MCF 10A (cell line): ENCODE measurements at regions of chr10 and their contacts with region 1.

Region 1: GRCh38 chr10:2978111-2978510 is 89.2 kb upstream of the PFKP start:
- DNase-seq: peak; percentile 50
- H3K4me3 Mint-ChIP-seq: no peak overlapping the region
- H3K27ac Mint-ChIP-seq: no peak overlapping the region
- H3K4me1 Mint-ChIP-seq: peaks cover 5% of the 10 kb centered on the region
- H3K27me3 Mint-ChIP-seq: no peaks in the 10 kb centered on the region
- CTCF ChIP-seq: peak; percentile 60

Region 2: GRCh38 chr10:1420661-1421362 is 1557.3 kb before region 1 on chr10:
- CTCF ChIA-PET with region 1: interaction called, 4 read pairs
- POLR2A ChIA-PET with region 1: no interaction called
- intact Hi-C with region 1: loop called (anchors 10 kb)
- DNase-seq: peak; percentile 69
- H3K4me3 Mint-ChIP-seq: peak overlapping the region; percentile 45
- H3K27ac Mint-ChIP-seq: no peak overlapping the region
- H3K4me1 Mint-ChIP-seq: peaks cover 6% of the 10 kb centered on the region
- H3K27me3 Mint-ChIP-seq: peaks cover 19% of the 10 kb centered on the region
- CTCF ChIP-seq: peak; percentile 83

Region 3: GRCh38 chr10:2619472-2619871 is 358.6 kb before region 1 on chr10:
- CTCF ChIA-PET with region 1: no interaction called
- POLR2A ChIA-PET with region 1: no interaction called
- intact Hi-C with region 1: loop called (anchors 1 kb)
- DNase-seq: peak; percentile 47
- H3K4me3 Mint-ChIP-seq: no peak overlapping the region
- H3K27ac Mint-ChIP-seq: no peak overlapping the region
- H3K4me1 Mint-ChIP-seq: peaks cover 11% of the 10 kb centered on the region
- H3K27me3 Mint-ChIP-seq: peaks cover 54% of the 10 kb centered on the region
- CTCF ChIP-seq: peak; percentile 37

Region 4: DNA sequence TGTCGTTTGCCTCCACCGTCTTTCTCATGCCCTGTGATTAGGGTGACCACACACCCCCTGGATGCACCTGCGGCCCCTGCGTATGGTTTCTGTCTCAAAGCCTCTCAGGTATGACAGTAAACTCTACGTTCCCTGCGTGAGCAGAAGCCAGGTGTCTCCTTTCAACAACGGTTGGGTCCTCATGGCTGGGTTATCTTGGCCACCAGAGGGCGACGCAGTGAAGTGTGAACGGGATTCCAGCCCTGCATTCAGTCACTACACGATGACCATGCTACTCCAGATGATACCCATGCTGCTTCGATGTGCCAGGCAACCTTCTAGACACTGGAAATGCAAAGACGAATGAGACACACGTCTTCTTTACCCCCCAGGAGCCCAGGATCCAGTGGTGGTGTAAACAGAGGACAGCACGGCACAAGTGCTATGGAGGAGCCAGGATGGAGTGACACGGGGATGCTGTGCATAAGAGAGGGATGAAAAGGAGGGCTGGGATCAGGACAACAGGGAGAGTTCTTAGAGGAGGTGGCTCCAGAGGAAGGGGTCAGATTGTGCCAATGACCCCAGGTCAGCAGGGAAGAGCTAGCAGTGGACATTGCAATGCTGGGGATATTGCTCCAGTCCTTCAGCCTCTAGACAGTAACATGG is 138.9 kb before region 1 on chr10:
- CTCF ChIA-PET with region 1: interaction called, 3 read pairs
- POLR2A ChIA-PET with region 1: no interaction called
- intact Hi-C with region 1: loop called (anchors 1 kb)
- DNase-seq: peak; percentile 64
- H3K4me3 Mint-ChIP-seq: no peak overlapping the region
- H3K27ac Mint-ChIP-seq: no peak overlapping the region
- H3K4me1 Mint-ChIP-seq: no peaks in the 10 kb centered on the region
- H3K27me3 Mint-ChIP-seq: peaks cover 70% of the 10 kb centered on the region
- CTCF ChIP-seq: peak; percentile 42

Region 5: DNA sequence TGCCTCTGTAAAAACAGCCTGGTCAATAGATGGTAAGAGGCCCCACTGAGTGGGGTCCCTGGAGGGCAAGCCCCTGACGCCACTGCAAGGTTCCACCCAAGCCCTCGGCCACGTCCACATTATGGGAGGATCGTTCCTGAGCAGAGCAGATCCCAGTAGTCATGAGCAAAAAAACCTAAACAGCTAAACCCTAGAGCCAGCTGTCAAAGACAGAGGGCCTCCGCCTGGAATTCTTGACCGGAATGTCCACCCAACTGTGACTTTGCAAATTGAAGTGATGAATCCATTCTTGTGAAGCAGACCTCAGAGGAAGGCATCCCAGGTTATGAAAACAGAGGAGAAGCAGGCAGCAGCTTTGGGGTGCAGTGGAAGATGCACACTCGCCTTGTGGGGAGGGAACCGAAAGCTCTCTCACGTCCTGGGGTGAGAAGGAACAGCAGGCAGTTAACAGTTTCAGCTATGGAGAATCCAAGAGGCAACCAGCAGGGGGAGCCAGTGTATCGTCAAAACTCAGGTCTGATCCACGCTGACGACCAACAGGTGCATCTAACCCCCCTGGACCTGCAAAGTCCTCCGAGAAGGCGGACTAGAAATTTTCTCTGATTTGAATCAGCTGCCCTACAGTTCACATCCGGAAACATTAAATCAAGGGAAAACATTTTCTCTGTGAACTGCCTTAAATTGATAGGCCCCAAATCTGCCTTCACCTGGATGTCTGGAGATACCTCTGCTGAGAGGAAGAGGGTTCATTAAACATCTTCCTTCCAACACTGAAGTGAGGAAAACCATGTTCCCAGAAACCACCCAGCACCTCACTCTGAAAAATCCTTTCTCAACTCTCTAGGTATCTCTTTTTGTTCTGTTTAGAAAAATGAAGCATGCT is 49.9 kb before region 1 on chr10:
- CTCF ChIA-PET with region 1: interaction called, 9 read pairs
- POLR2A ChIA-PET with region 1: no interaction called
- intact Hi-C with region 1: loop called (anchors 1 kb)
- DNase-seq: peak; percentile 76
- H3K4me3 Mint-ChIP-seq: no peak overlapping the region
- H3K27ac Mint-ChIP-seq: no peak overlapping the region
- H3K4me1 Mint-ChIP-seq: peaks cover 12% of the 10 kb centered on the region
- H3K27me3 Mint-ChIP-seq: peaks cover 54% of the 10 kb centered on the region
- CTCF ChIP-seq: peak; percentile 90

Region 6: DNA sequence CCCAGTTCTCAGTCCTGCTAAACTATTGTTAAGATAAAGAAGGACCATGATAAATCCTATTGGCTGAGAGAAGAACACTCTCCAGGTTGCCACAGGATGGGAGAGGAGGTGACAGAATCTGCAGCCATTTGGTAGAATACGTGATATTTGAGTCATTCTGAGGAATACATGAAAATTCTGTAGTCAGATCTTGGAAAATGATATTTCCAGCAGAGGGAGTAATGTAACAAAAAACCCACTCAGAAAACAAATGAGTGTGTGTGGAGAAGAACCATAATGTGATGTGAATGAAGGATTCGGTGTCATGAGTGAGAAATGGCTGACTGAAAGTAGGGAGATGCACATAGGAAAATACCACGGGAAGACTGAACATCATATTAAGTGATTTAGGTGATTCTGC is 39.2 kb before region 1 on chr10:
- CTCF ChIA-PET with region 1: interaction called, 10 read pairs
- POLR2A ChIA-PET with region 1: no interaction called
- intact Hi-C with region 1: loop called (anchors 1 kb)
- DNase-seq: no peak
- H3K4me3 Mint-ChIP-seq: no peak overlapping the region
- H3K27ac Mint-ChIP-seq: no peak overlapping the region
- H3K4me1 Mint-ChIP-seq: no peaks in the 10 kb centered on the region
- H3K27me3 Mint-ChIP-seq: peaks cover 97% of the 10 kb centered on the region
- CTCF ChIP-seq: no peak